Activated B cell treated with CpG ODN at 0.5 μM for 24 hours (primary cell): ENCODE measurements at regions of chr16 and their contacts with region 1.

Region 1: GRCh38 chr16:14354551-14355351 is 275.3 kb downstream of the PARN start:
- DNase-seq: no peak
- ATAC-seq: peak; percentile 93
- H3K4me3 Mint-ChIP-seq: peak overlapping the region; percentile 59
- H3K27ac Mint-ChIP-seq: peak overlapping the region; percentile 64
- H3K4me1 Mint-ChIP-seq: peaks cover 32% of the 10 kb centered on the region
- H3K27me3 Mint-ChIP-seq: peaks cover 2% of the 10 kb centered on the region
- CTCF ChIP-seq: no peak

Region 2: DNA sequence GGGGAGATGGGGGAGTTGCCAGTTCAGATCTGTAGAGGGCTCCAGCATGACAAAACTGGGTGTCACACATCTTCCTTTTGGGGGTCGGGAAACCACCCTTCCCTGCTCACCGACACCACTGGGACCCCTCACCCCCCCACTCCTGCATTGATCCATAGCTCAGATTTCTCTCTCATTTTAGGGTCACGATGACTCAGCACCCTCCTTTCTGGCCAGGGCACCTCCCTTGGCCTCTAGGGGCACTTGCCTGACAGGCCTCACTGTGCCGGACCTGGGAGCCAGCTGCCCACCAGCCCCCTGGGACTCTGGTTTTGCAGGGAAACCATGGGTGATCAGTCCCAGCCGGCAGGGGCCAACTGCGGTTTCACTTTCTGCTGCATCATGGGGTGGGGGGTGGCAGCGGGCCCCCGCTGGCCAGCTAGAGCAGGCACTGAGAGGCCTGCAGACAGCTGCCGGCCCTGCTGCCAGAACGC is 44.2 kb before region 1 on chr16:
- CTCF ChIA-PET with region 1: no interaction called
- POLR2A ChIA-PET with region 1: interaction called, 17 read pairs
- intact Hi-C with region 1: loop called (anchors 1 kb)
- DNase-seq: no peak
- ATAC-seq: peak; percentile 64
- H3K4me3 Mint-ChIP-seq: peak overlapping the region; percentile 67
- H3K27ac Mint-ChIP-seq: no peak overlapping the region
- H3K4me1 Mint-ChIP-seq: peaks cover 25% of the 10 kb centered on the region
- H3K27me3 Mint-ChIP-seq: peaks cover 2% of the 10 kb centered on the region
- CTCF ChIP-seq: no peak

Region 3: DNA sequence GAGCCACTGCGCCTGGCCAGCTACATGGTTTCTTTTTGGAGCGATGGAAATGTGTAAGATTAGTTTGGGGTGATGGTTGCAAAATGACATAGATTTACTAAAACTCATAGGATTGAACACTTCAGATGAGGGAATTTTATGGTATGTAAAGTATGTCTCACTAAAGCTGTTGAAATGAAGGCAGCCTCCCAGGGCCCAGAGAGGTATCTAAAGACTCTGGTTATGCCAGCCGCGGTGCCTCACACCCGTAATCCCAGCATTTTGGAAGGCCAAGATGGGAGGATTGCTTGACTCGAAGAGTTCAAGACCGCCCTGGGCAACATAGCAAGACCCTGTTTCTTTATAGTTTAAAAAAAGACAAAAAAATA is 20.4 kb after region 1 on chr16:
- CTCF ChIA-PET with region 1: no interaction called
- POLR2A ChIA-PET with region 1: interaction called, 7 read pairs
- intact Hi-C with region 1: loop called (anchors 2 kb)
- DNase-seq: no peak
- ATAC-seq: no peak
- H3K4me3 Mint-ChIP-seq: no peak overlapping the region
- H3K27ac Mint-ChIP-seq: no peak overlapping the region
- H3K4me1 Mint-ChIP-seq: peaks cover 9% of the 10 kb centered on the region
- H3K27me3 Mint-ChIP-seq: no peaks in the 10 kb centered on the region
- CTCF ChIP-seq: no peak

Region 4: DNA sequence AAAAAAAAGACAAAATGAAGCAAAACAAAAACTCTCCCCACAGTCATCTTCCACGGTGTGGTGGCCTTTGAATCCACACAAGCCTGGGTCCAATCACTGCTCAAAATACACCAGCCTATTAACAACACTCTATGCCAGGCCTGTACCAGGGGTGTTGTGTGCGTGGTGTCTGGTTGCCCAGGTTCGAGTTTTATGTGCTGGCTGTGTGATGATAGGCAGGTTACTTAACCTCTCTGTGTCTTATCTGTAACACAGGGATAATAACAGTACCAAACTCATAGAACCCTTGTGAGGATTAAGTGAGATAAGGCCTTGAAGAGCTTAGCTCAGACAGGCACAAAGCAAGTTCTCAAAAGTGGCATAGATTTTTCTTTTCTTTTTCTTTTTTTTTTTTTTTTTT is 40.1 kb after region 1 on chr16:
- CTCF ChIA-PET with region 1: no interaction called
- POLR2A ChIA-PET with region 1: no interaction called
- intact Hi-C with region 1: no loop called
- DNase-seq: no peak
- ATAC-seq: no peak
- H3K4me3 Mint-ChIP-seq: no peak overlapping the region
- H3K27ac Mint-ChIP-seq: no peak overlapping the region
- H3K4me1 Mint-ChIP-seq: no peaks in the 10 kb centered on the region
- H3K27me3 Mint-ChIP-seq: no peaks in the 10 kb centered on the region
- CTCF ChIP-seq: no peak

Region 5: GRCh38 chr16:14405611-14406537 is 51.1 kb after region 1 on chr16:
- CTCF ChIA-PET with region 1: no interaction called
- POLR2A ChIA-PET with region 1: no interaction called
- intact Hi-C with region 1: loop called (anchors 2 kb)
- DNase-seq: peak; percentile 41
- ATAC-seq: peak; percentile 78
- H3K4me3 Mint-ChIP-seq: no peak overlapping the region
- H3K27ac Mint-ChIP-seq: peak overlapping the region; percentile 75
- H3K4me1 Mint-ChIP-seq: peaks cover 14% of the 10 kb centered on the region
- H3K27me3 Mint-ChIP-seq: no peaks in the 10 kb centered on the region
- CTCF ChIP-seq: no peak